Activated CD4-positive, alpha-beta T cell treated with anti-CD3 and anti-CD28 coated beads for 36 hours (primary cell): ENCODE measurements at regions of chr11 and their contacts with region 1.

Region 1: GRCh38 chr11:128643661-128644317 is 50.1 kb upstream of the FLI1 start:
- DNase-seq: no peak
- ATAC-seq: no peak
- H3K4me3 Mint-ChIP-seq: no peak overlapping the region
- H3K27ac Mint-ChIP-seq: no peak overlapping the region
- H3K4me1 Mint-ChIP-seq: peaks cover 5% of the 10 kb centered on the region
- H3K27me3 Mint-ChIP-seq: no peaks in the 10 kb centered on the region

Region 2: GRCh38 chr11:128686745-128687177 is 43.0 kb after region 1 on chr11:
- CTCF ChIA-PET with region 1: no interaction called
- POLR2A ChIA-PET with region 1: no interaction called
- intact Hi-C with region 1: loop called in 1 of 2 experiments (anchors 5 kb)
- DNase-seq: peak; percentile 80
- ATAC-seq: peak; percentile 80
- H3K4me3 Mint-ChIP-seq: peak overlapping the region; percentile 70
- H3K27ac Mint-ChIP-seq: peak overlapping the region; percentile 56
- H3K4me1 Mint-ChIP-seq: peaks cover 32% of the 10 kb centered on the region
- H3K27me3 Mint-ChIP-seq: peaks cover 33% of the 10 kb centered on the region

Region 3: GRCh38 chr11:128848815-128849455 is 205.1 kb after region 1 on chr11:
- CTCF ChIA-PET with region 1: interaction called, 4 read pairs
- POLR2A ChIA-PET with region 1: no interaction called
- intact Hi-C with region 1: loop called in 1 of 2 experiments (anchors 5 kb)
- DNase-seq: peak; percentile 84
- ATAC-seq: peak; percentile 85
- H3K4me3 Mint-ChIP-seq: no peak overlapping the region
- H3K27ac Mint-ChIP-seq: no peak overlapping the region
- H3K4me1 Mint-ChIP-seq: peaks cover 18% of the 10 kb centered on the region
- H3K27me3 Mint-ChIP-seq: no peaks in the 10 kb centered on the region

Region 4: DNA sequence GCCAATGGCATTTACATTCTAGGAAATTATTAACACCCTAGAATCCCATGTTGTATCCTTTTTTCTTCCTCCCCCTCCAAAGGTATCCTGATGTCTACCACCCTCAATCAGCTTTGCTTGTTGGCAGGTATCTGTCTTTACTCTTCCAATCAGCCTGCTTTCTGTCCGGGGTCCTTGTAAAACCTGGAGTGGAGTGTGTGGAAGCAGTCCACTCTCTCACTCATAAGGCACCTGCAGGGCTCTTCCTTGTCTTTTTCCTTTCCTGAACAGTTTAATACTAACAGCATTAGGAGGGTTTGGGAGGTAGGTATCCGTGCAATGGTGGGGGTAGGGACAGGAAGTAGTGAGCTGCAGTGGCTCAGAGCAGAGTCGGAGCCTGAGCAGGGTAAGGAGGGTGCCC is 925.2 kb after region 1 on chr11:
- CTCF ChIA-PET with region 1: no interaction called
- POLR2A ChIA-PET with region 1: no interaction called
- intact Hi-C with region 1: no loop called
- DNase-seq: no peak
- ATAC-seq: no peak
- H3K4me3 Mint-ChIP-seq: no peak overlapping the region
- H3K27ac Mint-ChIP-seq: no peak overlapping the region
- H3K4me1 Mint-ChIP-seq: no peaks in the 10 kb centered on the region
- H3K27me3 Mint-ChIP-seq: no peaks in the 10 kb centered on the region